Ovary (tissue), 10 donors: ENCODE measurements at regions of chr6 and their contacts with region 1.

Region 1: GRCh38 chr6:134317471-134318131 is at the start of gene SGK1:
- DNase-seq: peak; percentile 68 to 78 (median 73)
- H3K4me3 ChIP-seq: peak within 1 kb of the TSS; percentile 42
- H3K27ac ChIP-seq: peak within 1 kb of the TSS; percentile 68 to 83
- H3K4me1 ChIP-seq: peaks cover 6% of the 10 kb centered on the region
- H3K27me3 ChIP-seq: no peaks in the 10 kb centered on the region
- CTCF ChIP-seq: peak in 1 of 3 donors; percentile 14
- EP300 ChIP-seq: no peak
- POLR2A ChIP-seq: peak; percentile 44
- total RNA-seq, gene SGK1: 145 to 610 (median 279) TPM

Region 2: DNA sequence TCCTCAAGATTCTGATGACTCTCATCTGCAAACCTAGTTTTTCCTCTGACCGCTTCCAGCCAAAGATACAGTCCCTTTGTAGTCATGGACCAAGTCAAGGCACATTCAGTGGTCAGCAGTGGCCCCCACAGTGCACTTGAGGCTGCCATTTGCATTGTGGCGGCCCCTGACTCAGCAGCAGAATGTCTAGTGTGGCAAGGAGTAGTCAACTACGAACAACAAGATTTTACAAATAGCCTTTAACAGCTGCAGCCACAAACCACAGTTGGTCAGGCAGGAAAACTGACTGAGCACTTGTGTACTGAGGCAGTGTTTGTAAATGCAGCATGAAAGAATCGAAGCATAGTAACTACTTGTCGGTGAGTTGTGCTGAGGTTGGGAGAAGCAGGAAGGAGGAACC is 314.8 kb before region 1 on chr6:
- intact Hi-C with region 1: no loop called
- DNase-seq: no peak
- H3K4me3 ChIP-seq: no peak overlapping the region
- H3K27ac ChIP-seq: no peak overlapping the region
- H3K4me1 ChIP-seq: no peaks in the 10 kb centered on the region
- H3K27me3 ChIP-seq: no peaks in the 10 kb centered on the region
- CTCF ChIP-seq: no peak
- EP300 ChIP-seq: no peak
- POLR2A ChIP-seq: no peak

Region 3: GRCh38 chr6:134247231-134247833 is 70.3 kb before region 1 on chr6:
- intact Hi-C with region 1: loop called in 1 of 4 experiments (anchors 10 kb)
- DNase-seq: no peak
- H3K4me3 ChIP-seq: no peak overlapping the region
- H3K27ac ChIP-seq: peak overlapping the region in 1 of 2 donors; percentile 90
- H3K4me1 ChIP-seq: peaks cover 19% of the 10 kb centered on the region
- H3K27me3 ChIP-seq: no peaks in the 10 kb centered on the region
- CTCF ChIP-seq: no peak
- EP300 ChIP-seq: no peak
- POLR2A ChIP-seq: no peak

Region 4: GRCh38 chr6:134640975-134641429 is 323.4 kb after region 1 on chr6:
- intact Hi-C with region 1: loop called in 1 of 4 experiments (anchors 10 kb)
- DNase-seq: peak; percentile 66 to 87 (median 77)
- H3K4me3 ChIP-seq: no peak overlapping the region
- H3K27ac ChIP-seq: no peak overlapping the region
- H3K4me1 ChIP-seq: peaks cover 3% of the 10 kb centered on the region
- H3K27me3 ChIP-seq: no peaks in the 10 kb centered on the region
- CTCF ChIP-seq: peak; percentile 73 to 93 (median 84)
- EP300 ChIP-seq: no peak
- POLR2A ChIP-seq: no peak